ENCODE measurements at regions of chr1 and their contacts with region 1.

Region 1: GRCh38 chr1:170604065-170604464 is 59.9 kb upstream of the PRRX1 start:
- DNase-seq: no peak
- ATAC-seq: no peak
- H3K4me3 ChIP-seq: no peak overlapping the region
- H3K4me3 Mint-ChIP-seq: no peak overlapping the region
- H3K27ac ChIP-seq: no peak overlapping the region
- H3K27ac Mint-ChIP-seq: no peak overlapping the region
- H3K4me1 ChIP-seq: no peaks in the 10 kb centered on the region
- H3K4me1 Mint-ChIP-seq: no peaks in the 10 kb centered on the region
- H3K27me3 ChIP-seq: peaks cover 0 to 3% of the 10 kb centered on the region in 2 experiments
- H3K27me3 Mint-ChIP-seq: peaks cover 7% of the 10 kb centered on the region
- CTCF ChIP-seq: no peak

Region 2: DNA sequence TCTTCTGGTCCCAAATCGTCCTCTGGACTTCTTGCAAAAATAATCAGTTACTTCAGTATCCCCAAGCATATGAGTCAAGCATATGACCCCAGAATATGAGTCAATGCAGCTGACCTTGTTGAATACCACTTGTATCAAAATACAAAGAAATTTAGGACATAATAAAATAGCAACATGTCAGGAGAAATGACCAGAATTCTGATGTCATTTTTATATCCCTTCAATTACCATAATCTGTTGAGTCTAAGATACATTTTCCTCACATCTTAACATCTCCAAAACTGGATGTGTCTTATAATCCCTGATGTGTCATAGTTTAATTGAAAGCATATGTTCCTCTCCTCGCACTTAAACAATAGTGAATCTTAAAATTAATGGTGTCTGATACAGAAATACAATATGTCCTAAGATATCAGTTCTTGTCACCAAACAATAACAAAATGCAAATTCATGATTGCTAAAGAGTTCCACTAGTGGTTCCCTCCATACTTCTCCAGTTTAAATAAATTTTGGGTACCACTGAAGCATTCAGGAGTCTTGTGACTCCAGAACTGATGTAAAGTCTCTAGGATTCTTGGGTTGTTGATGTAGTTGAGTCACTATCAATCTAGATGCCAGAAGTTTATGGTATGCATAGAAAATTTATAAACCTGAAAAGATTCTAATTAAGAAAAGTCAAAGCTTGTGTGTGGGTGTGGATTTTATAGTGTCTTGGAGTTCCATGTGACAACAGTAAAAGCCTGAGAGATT is 571.4 kb before region 1 on chr1:
- CTCF ChIA-PET with region 1: no interaction called
- POLR2A ChIA-PET with region 1: no interaction called
- intact Hi-C with region 1: no loop called
- DNase-seq: no peak
- ATAC-seq: no peak
- H3K4me3 ChIP-seq: no peak overlapping the region
- H3K4me3 Mint-ChIP-seq: no peak overlapping the region
- H3K27ac ChIP-seq: no peak overlapping the region
- H3K27ac Mint-ChIP-seq: no peak overlapping the region
- H3K4me1 ChIP-seq: no peaks in the 10 kb centered on the region
- H3K4me1 Mint-ChIP-seq: no peaks in the 10 kb centered on the region
- H3K27me3 ChIP-seq: no peaks in the 10 kb centered on the region
- H3K27me3 Mint-ChIP-seq: no peaks in the 10 kb centered on the region
- CTCF ChIP-seq: no peak

Region 3: GRCh38 chr1:170436928-170437327 is 167.1 kb before region 1 on chr1:
- CTCF ChIA-PET with region 1: no interaction called
- POLR2A ChIA-PET with region 1: no interaction called
- intact Hi-C with region 1: no loop called
- DNase-seq: no peak
- ATAC-seq: no peak
- H3K4me3 ChIP-seq: no peak overlapping the region
- H3K4me3 Mint-ChIP-seq: no peak overlapping the region
- H3K27ac ChIP-seq: no peak overlapping the region
- H3K27ac Mint-ChIP-seq: no peak overlapping the region
- H3K4me1 ChIP-seq: no peaks in the 10 kb centered on the region
- H3K4me1 Mint-ChIP-seq: no peaks in the 10 kb centered on the region
- H3K27me3 ChIP-seq: no peaks in the 10 kb centered on the region
- H3K27me3 Mint-ChIP-seq: peaks cover 15% of the 10 kb centered on the region
- CTCF ChIP-seq: no peak

Region 4: DNA sequence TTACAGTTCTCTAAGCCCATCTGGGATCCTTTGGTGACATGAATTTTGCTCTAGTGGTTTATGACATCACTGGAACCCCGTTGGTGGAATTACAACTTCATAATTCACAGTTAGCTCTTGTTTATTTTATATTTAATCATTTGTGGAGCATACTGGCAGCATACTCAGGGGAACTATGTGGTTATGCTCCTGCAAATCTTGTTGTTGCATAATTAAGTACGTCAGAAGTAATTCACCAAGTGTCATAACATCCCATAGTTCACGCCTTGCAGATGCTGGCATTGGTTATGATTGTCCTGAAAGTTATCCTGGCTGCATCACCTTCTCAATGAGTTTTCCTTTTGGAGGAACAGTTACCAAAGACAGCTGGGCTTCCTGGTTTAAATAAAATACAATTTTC is 76.4 kb after region 1 on chr1:
- CTCF ChIA-PET with region 1: no interaction called
- POLR2A ChIA-PET with region 1: no interaction called
- intact Hi-C with region 1: loop called in 1 of 2 experiments (anchors 2 kb)
- DNase-seq: no peak
- ATAC-seq: no peak
- H3K4me3 ChIP-seq: no peak overlapping the region
- H3K4me3 Mint-ChIP-seq: no peak overlapping the region
- H3K27ac ChIP-seq: no peak overlapping the region
- H3K27ac Mint-ChIP-seq: no peak overlapping the region
- H3K4me1 ChIP-seq: no peaks in the 10 kb centered on the region
- H3K4me1 Mint-ChIP-seq: no peaks in the 10 kb centered on the region
- H3K27me3 ChIP-seq: no peaks in the 10 kb centered on the region
- H3K27me3 Mint-ChIP-seq: peaks cover 29% of the 10 kb centered on the region
- CTCF ChIP-seq: no peak